Calu3 (cell line): ENCODE measurements at regions of chr15 and their contacts with region 1.

Region 1: DNA sequence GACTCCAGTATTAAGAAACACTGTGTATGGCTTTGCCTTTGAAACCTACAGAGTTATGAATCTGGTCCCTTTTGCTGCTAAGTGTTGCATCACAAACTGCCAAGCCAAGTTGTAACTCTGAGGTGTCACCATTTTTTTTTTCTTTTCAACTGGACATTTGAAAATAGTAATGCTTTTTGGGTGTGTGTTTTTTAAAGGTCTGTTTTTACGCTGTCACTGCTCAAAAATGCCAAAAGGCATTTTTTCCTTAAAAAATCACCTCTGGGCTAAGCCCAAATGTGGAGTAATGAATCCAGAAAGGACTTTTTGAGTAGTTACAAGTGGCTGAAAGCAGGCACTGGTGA is 9.5 kb downstream of the SMAD3 start:
- DNase-seq: no peak
- H3K4me3 Mint-ChIP-seq: peak overlapping the region; percentile 41
- H3K27ac Mint-ChIP-seq: peak overlapping the region; percentile 58
- H3K4me1 Mint-ChIP-seq: peaks cover 86% of the 10 kb centered on the region
- H3K27me3 Mint-ChIP-seq: no peaks in the 10 kb centered on the region
- CTCF ChIP-seq: no peak

Region 2: DNA sequence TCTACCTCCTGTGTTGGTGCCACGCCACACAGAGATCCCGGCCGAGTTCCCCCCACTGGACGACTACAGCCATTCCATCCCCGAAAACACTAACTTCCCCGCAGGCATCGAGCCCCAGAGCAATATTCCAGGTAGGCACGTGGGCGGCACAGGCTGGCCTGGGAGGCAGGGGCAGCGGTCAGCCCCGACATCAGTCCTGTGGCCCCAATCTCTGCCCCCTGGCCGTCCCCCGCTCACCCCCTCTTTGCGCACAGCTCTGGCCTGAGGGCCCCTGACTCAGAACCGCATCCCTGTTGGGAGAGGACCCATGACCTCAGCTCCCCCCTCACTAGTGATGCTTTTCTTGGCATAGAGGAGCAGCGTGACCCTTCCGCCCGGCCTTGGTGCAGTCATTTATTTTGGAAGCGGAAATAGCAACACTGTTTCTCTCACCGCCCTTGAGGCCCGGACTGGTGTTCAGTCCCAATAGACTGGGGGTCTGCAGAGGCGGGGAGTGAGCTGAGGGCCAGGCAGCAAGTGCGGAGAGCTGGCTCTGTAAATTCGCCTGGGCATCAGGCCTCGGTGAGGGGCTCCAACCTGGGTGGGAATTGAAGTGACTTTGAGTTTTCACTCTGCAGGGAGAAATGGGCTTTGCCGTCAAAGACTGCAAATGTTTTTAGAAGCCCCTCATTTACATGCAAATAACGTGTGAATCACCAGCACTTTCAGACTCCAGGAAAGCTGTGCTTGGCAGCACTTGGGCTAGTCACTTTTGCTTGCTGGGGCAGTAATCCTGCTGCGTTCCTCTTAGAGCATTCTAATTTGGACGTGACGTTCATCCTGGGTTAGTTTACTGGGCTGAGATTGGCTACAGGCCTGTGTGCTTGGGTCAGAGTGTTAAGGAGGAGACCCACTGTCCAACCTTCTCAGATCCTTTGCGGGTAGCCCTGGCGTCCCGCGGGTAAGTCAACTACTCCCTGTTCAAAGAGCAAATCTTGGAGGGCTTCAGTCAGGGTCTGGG is 90.7 kb after region 1 on chr15:
- CTCF ChIA-PET with region 1: no interaction called
- intact Hi-C with region 1: no loop called
- DNase-seq: no peak
- H3K4me3 Mint-ChIP-seq: no peak overlapping the region
- H3K27ac Mint-ChIP-seq: peak overlapping the region; percentile 66
- H3K4me1 Mint-ChIP-seq: peaks cover 32% of the 10 kb centered on the region
- H3K27me3 Mint-ChIP-seq: no peaks in the 10 kb centered on the region
- CTCF ChIP-seq: no peak

Region 3: GRCh38 chr15:67175643-67176071 is 100.8 kb after region 1 on chr15:
- CTCF ChIA-PET with region 1: interaction called, 11 read pairs
- intact Hi-C with region 1: no loop called
- DNase-seq: no peak
- H3K4me3 Mint-ChIP-seq: peak overlapping the region; percentile 22
- H3K27ac Mint-ChIP-seq: peak overlapping the region; percentile 58
- H3K4me1 Mint-ChIP-seq: peaks cover 71% of the 10 kb centered on the region
- H3K27me3 Mint-ChIP-seq: no peaks in the 10 kb centered on the region
- CTCF ChIP-seq: no peak